GM12878 (cell line): ENCODE measurements at regions of chr6 and their contacts with region 1.

Region 1: GRCh38 chr6:102853269-102853955 is 1459.9 kb downstream of the GRIK2 start:
- DNase-seq: no peak
- ATAC-seq: no peak
- H3K4me3 ChIP-seq: no peak overlapping the region
- H3K27ac ChIP-seq: no peak overlapping the region
- H3K4me1 ChIP-seq: no peaks in the 10 kb centered on the region
- H3K27me3 ChIP-seq: no peaks in the 10 kb centered on the region
- CTCF ChIP-seq: no peak
- EP300 ChIP-seq: no peak
- POLR2A ChIP-seq: no peak
- RAD21 ChIP-seq: no peak

Region 2: DNA sequence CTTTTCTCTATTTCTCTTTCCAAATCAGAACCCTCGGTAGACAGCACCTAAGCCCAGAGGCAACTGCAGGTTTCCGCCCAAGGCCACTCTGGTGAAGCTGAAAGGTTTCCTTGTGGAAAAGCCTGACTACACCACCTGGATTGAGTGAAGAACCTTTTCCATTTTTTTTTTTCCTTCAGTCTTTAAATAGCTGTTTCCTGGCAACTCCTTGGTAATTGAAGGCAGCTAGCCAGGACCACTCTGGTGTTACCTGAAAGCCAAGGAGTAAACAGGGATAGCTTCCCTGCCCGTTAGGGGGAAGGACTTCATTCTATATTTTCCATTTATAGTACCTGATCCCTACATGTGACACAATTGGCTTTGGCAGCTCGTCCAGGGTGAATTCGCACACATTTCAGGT is 221.5 kb before region 1 on chr6:
- CTCF ChIA-PET with region 1: no interaction called
- POLR2A ChIA-PET with region 1: no interaction called
- RAD21 ChIA-PET with region 1: no interaction called
- SMC1A ChIA-PET with region 1: no interaction called
- in situ Hi-C with region 1: no loop called
- intact Hi-C with region 1: no loop called
- DNase-seq: no peak
- ATAC-seq: no peak
- H3K4me3 ChIP-seq: no peak overlapping the region
- H3K27ac ChIP-seq: no peak overlapping the region
- H3K4me1 ChIP-seq: no peaks in the 10 kb centered on the region
- H3K27me3 ChIP-seq: no peaks in the 10 kb centered on the region
- CTCF ChIP-seq: no peak
- EP300 ChIP-seq: no peak
- POLR2A ChIP-seq: no peak
- RAD21 ChIP-seq: no peak

Region 3: GRCh38 chr6:102902471-102902870 is 49.1 kb after region 1 on chr6:
- CTCF ChIA-PET with region 1: no interaction called
- POLR2A ChIA-PET with region 1: no interaction called
- RAD21 ChIA-PET with region 1: no interaction called
- SMC1A ChIA-PET with region 1: no interaction called
- in situ Hi-C with region 1: no loop called
- intact Hi-C with region 1: no loop called
- DNase-seq: no peak
- ATAC-seq: no peak
- H3K4me3 ChIP-seq: no peak overlapping the region
- H3K27ac ChIP-seq: no peak overlapping the region
- H3K4me1 ChIP-seq: no peaks in the 10 kb centered on the region
- H3K27me3 ChIP-seq: no peaks in the 10 kb centered on the region
- CTCF ChIP-seq: no peak
- EP300 ChIP-seq: no peak
- POLR2A ChIP-seq: no peak
- RAD21 ChIP-seq: no peak

Region 4: GRCh38 chr6:102950967-102951366 is 97.6 kb after region 1 on chr6:
- CTCF ChIA-PET with region 1: no interaction called
- POLR2A ChIA-PET with region 1: no interaction called
- RAD21 ChIA-PET with region 1: no interaction called
- SMC1A ChIA-PET with region 1: no interaction called
- in situ Hi-C with region 1: no loop called
- intact Hi-C with region 1: no loop called
- DNase-seq: no peak
- ATAC-seq: no peak
- H3K4me3 ChIP-seq: no peak overlapping the region
- H3K27ac ChIP-seq: no peak overlapping the region
- H3K4me1 ChIP-seq: no peaks in the 10 kb centered on the region
- H3K27me3 ChIP-seq: no peaks in the 10 kb centered on the region
- CTCF ChIP-seq: no peak
- EP300 ChIP-seq: no peak
- POLR2A ChIP-seq: no peak
- RAD21 ChIP-seq: no peak

Region 5: GRCh38 chr6:103107985-103108384 is 254.6 kb after region 1 on chr6:
- CTCF ChIA-PET with region 1: no interaction called
- POLR2A ChIA-PET with region 1: no interaction called
- RAD21 ChIA-PET with region 1: no interaction called
- SMC1A ChIA-PET with region 1: no interaction called
- in situ Hi-C with region 1: no loop called
- intact Hi-C with region 1: no loop called
- DNase-seq: no peak
- ATAC-seq: no peak
- H3K4me3 ChIP-seq: no peak overlapping the region
- H3K27ac ChIP-seq: no peak overlapping the region
- H3K4me1 ChIP-seq: no peaks in the 10 kb centered on the region
- H3K27me3 ChIP-seq: no peaks in the 10 kb centered on the region
- CTCF ChIP-seq: no peak
- EP300 ChIP-seq: no peak
- POLR2A ChIP-seq: no peak
- RAD21 ChIP-seq: no peak

Region 6: GRCh38 chr6:103273048-103273447 is 419.6 kb after region 1 on chr6:
- CTCF ChIA-PET with region 1: interaction called, 17 read pairs
- POLR2A ChIA-PET with region 1: no interaction called
- RAD21 ChIA-PET with region 1: interaction called, 10 read pairs
- SMC1A ChIA-PET with region 1: interaction called, 8 read pairs
- in situ Hi-C with region 1: no loop called
- intact Hi-C with region 1: loop called (anchors 5 kb)
- DNase-seq: no peak
- ATAC-seq: peak; percentile 84
- H3K4me3 ChIP-seq: no peak overlapping the region
- H3K27ac ChIP-seq: no peak overlapping the region
- H3K4me1 ChIP-seq: no peaks in the 10 kb centered on the region
- H3K27me3 ChIP-seq: no peaks in the 10 kb centered on the region
- CTCF ChIP-seq: peak in 2 of 3 experiments; percentile 37 to 48; a peak in 3 of 6 replicates
- EP300 ChIP-seq: no peak
- POLR2A ChIP-seq: no peak
- RAD21 ChIP-seq: peak; percentile 34; the same call in 1 of the 2 replicates